ENCODE measurements at regions of chr6 and their contacts with region 1.

Region 1: DNA sequence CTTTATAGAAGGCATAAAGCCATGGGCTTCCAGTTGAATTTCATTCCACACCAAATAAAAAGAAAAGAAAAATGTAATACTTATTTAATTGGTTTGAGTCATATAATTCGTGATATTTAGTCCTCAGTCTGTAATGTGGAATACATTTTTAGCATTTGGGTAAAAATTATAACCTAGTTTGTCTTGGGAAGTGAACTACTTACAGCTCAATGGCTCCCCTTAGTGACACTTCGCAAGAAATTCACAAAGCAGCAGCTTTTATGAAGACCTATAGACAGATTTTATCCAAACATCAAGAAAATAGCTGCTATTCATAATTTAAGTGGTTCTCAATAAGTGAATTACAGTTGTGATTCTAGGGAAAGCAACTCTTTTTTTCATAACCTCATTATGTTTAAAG is 72.1 kb downstream of the RSPO3 start:
- DNase-seq: peak in 1 of 4 donors; percentile 50
- ATAC-seq: peak; percentile 63
- H3K4me3 ChIP-seq: no peak overlapping the region
- H3K27ac ChIP-seq: no peak overlapping the region
- H3K4me1 ChIP-seq: peaks cover 8 to 20% of the 10 kb centered on the region in 2 donors
- H3K27me3 ChIP-seq: no peaks in the 10 kb centered on the region
- CTCF ChIP-seq: peak; percentile 22 to 40

Region 2: DNA sequence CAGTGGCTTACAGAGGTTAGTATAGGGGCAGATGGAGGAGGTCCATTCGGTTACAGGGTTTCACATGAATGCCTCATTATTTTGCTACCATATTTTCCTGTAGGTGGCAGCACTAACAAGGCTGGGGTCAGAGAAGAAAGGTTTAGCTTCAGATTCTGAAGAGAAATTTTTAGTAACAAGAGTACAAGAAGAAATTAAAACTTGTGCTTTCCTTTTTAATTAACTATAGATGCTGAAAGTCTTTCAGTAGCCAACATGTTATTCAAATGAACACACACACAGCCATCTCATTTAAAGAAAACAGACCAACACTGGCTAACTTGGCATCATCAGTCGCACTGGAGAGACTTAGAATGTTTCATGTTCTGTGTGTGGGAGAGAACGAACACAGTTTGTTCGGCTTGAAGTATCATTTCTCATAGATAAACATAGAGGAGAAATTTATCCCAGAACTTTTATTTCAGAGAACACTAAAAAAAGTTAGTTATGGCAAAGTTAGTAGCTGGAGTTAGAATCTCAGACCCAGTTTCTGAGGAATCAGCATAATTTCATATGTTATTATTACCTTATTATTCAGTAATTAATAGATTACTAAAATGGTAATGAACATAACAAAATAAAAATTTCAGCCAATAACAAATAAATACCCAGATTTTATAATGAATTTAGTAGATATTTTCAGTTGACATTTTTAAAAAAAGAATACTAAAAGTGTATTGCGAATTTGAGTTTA is 386.1 kb before region 1 on chr6:
- intact Hi-C with region 1: loop called in 1 of 2 experiments (anchors 10 kb)
- DNase-seq: peak in 2 of 4 donors; percentile 43 to 62
- ATAC-seq: peak; percentile 87
- H3K4me3 ChIP-seq: no peak overlapping the region
- H3K27ac ChIP-seq: no peak overlapping the region
- H3K4me1 ChIP-seq: no peaks in the 10 kb centered on the region
- H3K27me3 ChIP-seq: no peaks in the 10 kb centered on the region
- CTCF ChIP-seq: peak; percentile 45 to 56

Region 3: DNA sequence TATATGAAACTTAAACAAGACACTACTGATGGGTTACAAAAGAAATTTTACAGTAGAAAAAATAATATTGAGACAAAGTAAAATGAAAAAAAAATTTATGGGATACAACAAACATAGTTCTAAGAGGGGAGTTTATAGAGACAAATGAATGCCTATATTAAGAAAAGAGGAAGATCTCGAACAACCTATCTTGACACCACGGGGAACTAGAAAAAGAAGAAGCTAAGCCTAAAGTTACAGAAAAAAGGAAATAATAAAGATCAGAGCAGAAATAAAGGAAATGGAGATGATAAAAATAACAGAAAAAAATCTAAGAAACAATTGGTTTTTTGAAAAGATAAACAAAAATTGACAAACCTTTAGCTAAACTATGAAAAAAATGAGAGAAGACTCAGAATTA is 162.0 kb after region 1 on chr6:
- intact Hi-C with region 1: no loop called
- DNase-seq: no peak
- ATAC-seq: no peak
- H3K4me3 ChIP-seq: no peak overlapping the region
- H3K27ac ChIP-seq: peak overlapping the region in 1 of 2 donors; percentile 11
- H3K4me1 ChIP-seq: peaks cover 0 to 23% of the 10 kb centered on the region in 2 donors
- H3K27me3 ChIP-seq: no peaks in the 10 kb centered on the region
- CTCF ChIP-seq: no peak

Region 4: DNA sequence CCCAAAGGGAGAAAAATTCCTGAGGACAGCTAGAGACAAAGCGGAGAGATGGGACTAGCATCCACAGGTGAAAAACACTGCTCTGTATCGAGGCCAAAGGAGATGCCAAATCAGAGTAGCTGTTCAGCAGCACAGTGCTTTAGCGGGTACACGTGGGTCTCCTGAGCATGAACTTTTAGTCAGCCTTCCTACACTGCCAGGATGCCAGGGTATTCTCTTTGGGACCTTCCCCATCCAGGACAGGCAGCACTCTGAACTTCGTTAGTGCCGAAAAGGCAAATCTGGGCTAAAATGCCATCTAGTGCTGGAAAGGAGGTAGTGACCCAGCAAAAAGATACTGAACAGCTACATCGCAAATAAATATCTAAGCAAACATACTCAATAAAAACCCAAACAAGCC is 451.4 kb after region 1 on chr6:
- intact Hi-C with region 1: no loop called
- DNase-seq: peak in 1 of 4 donors; percentile 3
- ATAC-seq: peak; percentile 70
- H3K4me3 ChIP-seq: no peak overlapping the region
- H3K27ac ChIP-seq: no peak overlapping the region
- H3K4me1 ChIP-seq: no peaks in the 10 kb centered on the region
- H3K27me3 ChIP-seq: peaks cover 0 to 4% of the 10 kb centered on the region in 2 donors
- CTCF ChIP-seq: peak in 1 of 2 donors; percentile 39